ENCODE measurements at regions of chr12 and their contacts with region 1.

Region 1: DNA sequence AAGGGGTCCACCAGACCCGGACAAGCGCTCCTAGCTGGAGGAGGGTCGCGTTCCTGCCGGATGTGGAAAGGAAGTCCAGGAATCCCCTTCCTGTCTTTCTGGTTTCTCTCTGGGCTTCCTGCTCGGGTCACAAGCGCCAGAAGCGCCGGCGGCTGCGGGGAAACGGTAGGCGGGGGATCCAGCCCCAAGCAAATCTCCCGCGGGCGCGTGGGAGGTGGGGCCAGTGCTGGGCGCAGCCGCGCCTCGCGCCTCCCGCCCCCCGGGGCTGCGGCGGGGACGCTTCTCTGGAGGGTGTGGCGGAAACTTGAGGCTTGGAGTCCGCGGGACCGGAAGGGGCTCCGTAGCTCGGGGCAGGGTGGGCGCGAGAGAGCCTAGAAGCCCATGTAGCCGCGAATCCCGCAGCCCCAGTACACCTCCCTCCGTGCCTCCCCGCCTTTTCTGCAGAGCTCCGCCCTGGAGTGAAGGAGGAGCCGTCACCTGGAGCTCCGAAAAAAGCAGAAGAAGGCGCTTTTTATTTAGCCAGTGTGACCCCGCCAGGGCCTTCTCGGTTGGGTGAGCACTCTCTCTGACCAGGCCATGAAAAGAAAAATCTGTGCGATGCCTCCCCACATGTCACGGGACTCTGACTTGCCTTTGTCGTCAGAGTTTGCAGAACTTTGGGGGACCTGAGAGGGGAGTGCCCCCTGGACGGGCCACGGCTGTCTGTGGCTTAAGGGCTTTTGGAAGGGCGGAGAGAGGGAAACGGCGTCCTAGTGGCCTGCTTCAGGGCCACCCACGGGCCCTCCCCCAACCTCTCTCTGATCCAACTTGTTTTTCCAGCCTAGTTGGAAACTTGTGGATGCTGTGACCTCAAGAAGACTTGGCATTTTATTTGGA is 21.4 kb upstream of the CLEC2D start:
- DNase-seq: peak; percentile 82 to 95 (median 89)
- ATAC-seq: peak; percentile 76 to 80 (median 78)
- H3K4me3 ChIP-seq: peak overlapping the region; percentile 77 to 100
- H3K4me3 Mint-ChIP-seq: peak overlapping the region; percentile 90 to 95 (median 92)
- H3K27ac ChIP-seq: peak overlapping the region; percentile 91
- H3K27ac Mint-ChIP-seq: peak overlapping the region; percentile 98
- H3K4me1 ChIP-seq: peaks cover 21 to 39% of the 10 kb centered on the region in 2 experiments
- H3K4me1 Mint-ChIP-seq: peaks cover 52 to 64% (median 58%) of the 10 kb centered on the region in 3 donors
- H3K27me3 ChIP-seq: no peaks in the 10 kb centered on the region
- H3K27me3 Mint-ChIP-seq: no peaks in the 10 kb centered on the region

Region 2: DNA sequence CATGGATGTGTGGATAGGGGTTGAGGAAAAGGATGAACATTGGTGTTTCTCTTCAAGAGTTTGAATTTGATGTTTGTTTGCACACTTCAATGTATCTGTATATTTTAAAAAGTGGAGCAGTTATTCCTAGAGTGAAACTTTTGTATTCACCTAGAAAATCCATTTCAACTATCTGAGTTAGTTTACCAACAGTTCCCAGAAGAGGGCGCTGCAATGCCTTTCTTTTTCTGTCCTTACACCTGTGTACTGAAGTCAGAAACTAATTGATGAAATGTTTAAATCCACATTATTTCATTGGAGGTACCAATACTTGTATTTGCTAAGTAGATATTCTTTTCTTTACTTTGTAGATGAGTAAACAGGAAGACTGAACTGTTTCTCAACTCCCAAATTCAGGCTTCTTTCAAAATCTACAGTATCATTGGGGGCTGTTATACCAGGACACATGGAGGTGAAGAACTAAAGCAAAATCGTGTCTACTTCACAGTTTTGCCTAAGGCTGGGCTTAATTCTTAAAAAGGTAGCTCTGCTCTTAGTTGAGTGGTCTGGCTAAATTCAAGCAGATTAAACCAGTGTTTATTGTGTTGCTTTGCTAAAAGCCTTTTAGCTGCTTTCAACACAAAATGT is 13.8 kb before region 1 on chr12:
- CTCF ChIA-PET with region 1: interaction called, 3 to 26 read pairs
- POLR2A ChIA-PET with region 1: interaction called, 3 read pairs
- DNase-seq: peak; percentile 48 to 91 (median 74)
- ATAC-seq: peak; percentile 79 to 90 (median 82)
- H3K4me3 ChIP-seq: no peak overlapping the region
- H3K4me3 Mint-ChIP-seq: peak overlapping the region; percentile 17 to 54 (median 28)
- H3K27ac ChIP-seq: peak overlapping the region; percentile 48
- H3K27ac Mint-ChIP-seq: peak overlapping the region; percentile 74 to 95
- H3K4me1 ChIP-seq: peaks cover 24 to 25% of the 10 kb centered on the region in 2 experiments
- H3K4me1 Mint-ChIP-seq: peaks cover 76 to 91% (median 77%) of the 10 kb centered on the region in 3 donors
- H3K27me3 ChIP-seq: no peaks in the 10 kb centered on the region
- H3K27me3 Mint-ChIP-seq: no peaks in the 10 kb centered on the region

Region 3: GRCh38 chr12:9669534-9669933 is 21.5 kb after region 1 on chr12 and contains the start of gene CLEC2D:
- CTCF ChIA-PET with region 1: interaction called in 1 of 2 experiments, 8 read pairs
- POLR2A ChIA-PET with region 1: interaction called, 19 to 54 read pairs
- DNase-seq: peak in 9 of 35 experiments; percentile 19 to 76 (median 36)
- ATAC-seq: peak; percentile 44 to 57 (median 54)
- H3K4me3 ChIP-seq: peak within 1 kb of the TSS; percentile 69 to 77
- H3K4me3 Mint-ChIP-seq: peak within 1 kb of the TSS; percentile 85 to 90 (median 89)
- H3K27ac ChIP-seq: peak within 1 kb of the TSS; percentile 74
- H3K27ac Mint-ChIP-seq: peak within 1 kb of the TSS; percentile 83 to 95
- H3K4me1 ChIP-seq: peaks cover 39 to 47% of the 10 kb centered on the region in 2 experiments
- H3K4me1 Mint-ChIP-seq: peaks cover 66 to 70% (median 66%) of the 10 kb centered on the region in 3 donors
- H3K27me3 ChIP-seq: no peaks in the 10 kb centered on the region
- H3K27me3 Mint-ChIP-seq: no peaks in the 10 kb centered on the region
- total RNA-seq, gene CLEC2D: 217 to 338 (median 311) TPM

Measured in T-cell (primary cell).